A673 (cell line): ENCODE measurements at regions of chr6 and their contacts with region 1.

Region 1: DNA sequence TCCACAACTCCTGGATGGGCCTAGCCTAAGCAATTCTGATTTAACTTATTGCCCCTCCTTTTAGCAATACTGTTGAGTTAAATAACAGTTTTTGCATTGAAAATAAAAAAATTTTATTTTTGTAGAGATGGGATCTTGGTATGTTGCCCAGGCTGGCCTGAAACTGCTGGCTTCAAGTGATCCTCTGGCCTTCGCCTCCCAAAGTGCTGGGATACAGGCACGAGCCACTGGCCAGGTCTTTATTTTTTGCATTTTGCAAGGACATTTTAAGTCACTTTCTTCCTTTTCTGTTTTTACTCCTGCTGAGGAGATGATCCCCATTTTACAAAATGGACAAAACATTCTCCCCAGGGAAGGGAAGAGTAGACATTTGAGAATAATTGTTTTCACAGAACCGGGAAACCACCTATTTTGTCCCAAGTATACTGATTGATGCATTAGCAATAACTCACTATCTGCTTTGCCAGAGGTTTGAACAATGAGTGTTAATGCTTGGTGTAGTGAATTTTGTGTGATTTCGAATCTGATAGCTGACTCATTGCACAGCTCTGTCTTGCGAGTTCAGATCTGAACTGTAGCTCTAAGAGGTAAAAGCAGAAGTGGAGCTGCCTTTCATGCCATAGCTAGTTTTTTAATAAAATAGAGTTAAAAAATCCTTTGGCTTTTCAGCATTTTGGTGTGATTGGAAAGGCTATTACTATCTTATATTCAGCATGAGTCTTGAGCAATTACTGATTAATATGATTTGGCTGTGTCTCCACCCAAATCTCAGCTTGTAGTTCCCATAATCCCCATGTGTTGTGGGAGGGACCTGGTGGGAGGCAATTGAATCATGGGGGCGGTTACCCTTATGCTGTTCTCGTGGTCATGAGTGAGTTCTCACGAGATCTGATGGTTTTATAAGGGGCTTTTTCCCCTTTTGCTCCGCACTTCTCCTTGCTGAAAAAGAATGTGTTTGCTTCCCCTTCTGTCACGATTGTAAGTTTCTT is 20.9 kb downstream of the IGF2R start:
- DNase-seq: peak; percentile 29
- H3K4me3 ChIP-seq: no peak overlapping the region
- H3K27ac ChIP-seq: peak overlapping the region; percentile 26
- H3K4me1 ChIP-seq: peaks cover 10% of the 10 kb centered on the region
- H3K27me3 ChIP-seq: no peaks in the 10 kb centered on the region
- CTCF ChIP-seq: no peak

Region 2: GRCh38 chr6:158506577-158506976 is 1483.2 kb before region 1 on chr6:
- CTCF ChIA-PET with region 1: no interaction called
- POLR2A ChIA-PET with region 1: no interaction called
- intact Hi-C with region 1: no loop called
- DNase-seq: peak; percentile 35
- H3K4me3 ChIP-seq: no peak overlapping the region
- H3K27ac ChIP-seq: no peak overlapping the region
- H3K4me1 ChIP-seq: no peaks in the 10 kb centered on the region
- H3K27me3 ChIP-seq: no peaks in the 10 kb centered on the region
- CTCF ChIP-seq: peak; percentile 43

Region 3: DNA sequence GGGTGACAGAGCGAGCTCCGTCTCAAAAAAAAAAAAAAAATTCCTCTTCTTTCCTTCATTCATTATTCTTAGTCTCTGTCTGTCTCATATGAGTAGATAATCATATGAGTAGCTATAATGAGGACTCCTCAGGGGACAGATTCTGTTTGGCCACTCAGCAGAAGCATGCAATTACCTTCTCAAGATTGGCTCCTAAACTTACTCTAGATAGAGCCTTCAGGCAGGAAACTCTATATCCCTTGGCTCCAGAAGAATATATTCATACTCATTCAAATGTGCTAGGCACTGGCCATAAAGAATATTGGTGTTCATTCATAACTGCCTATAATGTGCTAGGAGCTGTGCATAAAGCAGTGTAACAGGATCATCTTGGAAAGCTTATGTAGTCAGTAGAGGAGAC is 230.1 kb before region 1 on chr6:
- CTCF ChIA-PET with region 1: no interaction called
- POLR2A ChIA-PET with region 1: interaction called, 10 read pairs
- intact Hi-C with region 1: no loop called
- DNase-seq: peak; percentile 12
- H3K4me3 ChIP-seq: no peak overlapping the region
- H3K27ac ChIP-seq: no peak overlapping the region
- H3K4me1 ChIP-seq: peaks cover 11% of the 10 kb centered on the region
- H3K27me3 ChIP-seq: no peaks in the 10 kb centered on the region
- CTCF ChIP-seq: no peak